ENCODE measurements at regions of chr14 and their contacts with region 1.

Region 1: DNA sequence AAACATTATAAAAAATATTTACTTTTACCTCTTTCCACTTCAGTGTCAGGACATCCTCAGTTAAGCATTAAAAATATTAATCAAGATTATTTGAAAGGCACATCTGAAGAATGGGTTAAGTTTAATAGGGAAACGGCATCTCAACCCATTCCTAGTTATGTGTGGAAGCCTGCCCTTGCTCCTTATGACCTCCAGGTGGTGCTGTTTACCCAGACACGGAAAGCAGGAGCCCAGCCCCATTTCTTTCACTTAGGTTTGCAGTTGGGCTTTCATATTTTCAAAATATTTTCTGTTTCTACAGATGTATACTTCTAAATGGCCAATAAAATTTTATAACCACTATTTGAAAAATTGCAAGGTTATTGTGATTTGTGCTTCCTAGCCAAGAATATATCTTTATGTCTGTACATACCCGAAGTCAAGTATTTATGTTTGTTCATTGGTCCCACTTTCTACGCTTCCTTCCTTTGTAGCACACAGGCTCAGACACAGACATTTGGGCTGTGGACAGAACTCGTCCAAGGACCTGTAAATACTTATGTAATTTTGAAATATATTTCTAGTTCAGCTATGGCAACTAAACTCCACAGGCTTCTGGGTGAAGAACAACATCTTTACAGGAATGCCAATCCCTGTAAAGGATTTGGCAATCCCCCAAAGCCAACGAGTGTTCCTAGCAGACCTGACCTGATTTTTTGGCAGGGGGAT is 247.1 kb downstream of the AKAP6 start:
- DNase-seq: no peak
- ATAC-seq: peak; percentile 66
- H3K4me3 Mint-ChIP-seq: no peak overlapping the region
- H3K27ac Mint-ChIP-seq: no peak overlapping the region
- H3K4me1 Mint-ChIP-seq: peaks cover 10% of the 10 kb centered on the region
- H3K27me3 Mint-ChIP-seq: peaks cover 1% of the 10 kb centered on the region
- CTCF ChIP-seq: peak; percentile 38

Region 2: GRCh38 chr14:32469388-32470160 is 106.7 kb before region 1 on chr14:
- CTCF ChIA-PET with region 1: no interaction called
- POLR2A ChIA-PET with region 1: no interaction called
- intact Hi-C with region 1: no loop called
- DNase-seq: no peak
- ATAC-seq: no peak
- H3K4me3 Mint-ChIP-seq: no peak overlapping the region
- H3K27ac Mint-ChIP-seq: no peak overlapping the region
- H3K4me1 Mint-ChIP-seq: no peaks in the 10 kb centered on the region
- H3K27me3 Mint-ChIP-seq: no peaks in the 10 kb centered on the region
- CTCF ChIP-seq: no peak

Region 3: GRCh38 chr14:33792720-33793368 is 1216.6 kb after region 1 on chr14:
- CTCF ChIA-PET with region 1: interaction called, 20 read pairs
- POLR2A ChIA-PET with region 1: no interaction called
- intact Hi-C with region 1: loop called (anchors 1 kb)
- DNase-seq: peak; percentile 30
- ATAC-seq: no peak
- H3K4me3 Mint-ChIP-seq: no peak overlapping the region
- H3K27ac Mint-ChIP-seq: no peak overlapping the region
- H3K4me1 Mint-ChIP-seq: peaks cover 6% of the 10 kb centered on the region
- H3K27me3 Mint-ChIP-seq: peaks cover 27% of the 10 kb centered on the region
- CTCF ChIP-seq: peak; percentile 49

Region 4: DNA sequence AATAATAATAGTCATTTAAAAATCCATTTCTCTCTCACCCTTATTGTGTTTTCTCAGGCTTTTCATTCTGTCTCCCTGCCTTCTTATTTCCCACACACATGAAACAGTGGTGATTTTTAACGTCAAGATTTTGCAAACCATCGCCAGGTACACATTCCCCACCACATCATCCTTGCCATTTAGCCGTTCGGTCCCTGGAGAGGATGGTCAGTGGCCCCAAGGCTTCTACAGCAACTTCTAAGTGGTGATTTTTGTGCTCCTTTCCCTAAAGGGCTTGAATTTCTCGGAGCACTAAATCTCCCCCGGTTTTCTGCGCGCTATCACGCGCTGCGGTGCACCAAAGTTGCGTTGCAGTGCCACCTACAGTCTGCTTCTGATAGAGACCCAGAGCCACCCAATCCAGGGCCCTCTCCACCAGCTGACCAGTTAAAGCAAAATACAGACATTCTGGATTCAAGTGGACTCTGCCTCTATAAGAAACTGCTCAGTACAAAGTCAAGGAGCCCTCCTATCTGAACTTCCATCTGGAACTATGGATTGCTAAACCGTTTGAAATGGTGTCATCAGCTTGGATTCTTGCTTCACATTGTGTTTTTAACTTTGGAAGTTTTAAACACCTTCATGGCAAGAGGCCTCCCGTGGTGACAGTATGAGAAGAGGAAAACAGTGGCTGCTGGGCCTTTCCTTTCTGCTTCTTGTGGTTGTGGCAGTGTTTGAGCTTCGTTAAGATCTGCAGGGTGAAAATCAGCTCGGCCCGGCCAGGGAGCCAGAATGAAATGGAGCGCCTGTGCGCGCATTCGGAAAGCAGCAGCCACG is 1651.8 kb after region 1 on chr14:
- CTCF ChIA-PET with region 1: no interaction called
- POLR2A ChIA-PET with region 1: no interaction called
- intact Hi-C with region 1: loop called (anchors 1 kb)
- DNase-seq: no peak
- ATAC-seq: no peak
- H3K4me3 Mint-ChIP-seq: no peak overlapping the region
- H3K27ac Mint-ChIP-seq: no peak overlapping the region
- H3K4me1 Mint-ChIP-seq: no peaks in the 10 kb centered on the region
- H3K27me3 Mint-ChIP-seq: peaks cover 3% of the 10 kb centered on the region
- CTCF ChIP-seq: no peak

Region 5: DNA sequence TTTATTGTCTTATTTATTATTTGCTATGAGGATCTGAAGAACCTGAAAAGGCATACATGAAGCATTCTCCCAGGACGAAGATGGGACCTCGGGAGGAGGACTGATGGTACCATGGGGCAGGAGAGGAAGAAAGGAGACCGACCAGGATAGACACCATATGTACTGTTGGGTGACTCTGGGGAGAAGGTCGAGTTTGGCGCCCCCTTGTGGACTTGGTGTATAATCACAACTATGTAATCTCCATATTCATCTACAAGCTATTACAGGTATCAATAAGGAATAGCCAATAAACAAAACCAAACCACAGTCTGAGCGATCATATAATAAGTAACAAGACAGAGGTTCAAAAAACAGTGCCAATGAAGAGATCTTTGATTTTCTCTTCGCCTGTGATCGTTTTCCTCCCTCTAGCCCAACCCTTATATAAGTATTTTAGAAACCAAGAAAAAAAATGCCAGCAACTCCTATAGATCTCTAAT is 1746.7 kb after region 1 on chr14:
- CTCF ChIA-PET with region 1: interaction called, 6 read pairs
- POLR2A ChIA-PET with region 1: no interaction called
- intact Hi-C with region 1: loop called (anchors 1 kb)
- DNase-seq: peak; percentile 37
- ATAC-seq: peak; percentile 60
- H3K4me3 Mint-ChIP-seq: no peak overlapping the region
- H3K27ac Mint-ChIP-seq: no peak overlapping the region
- H3K4me1 Mint-ChIP-seq: no peaks in the 10 kb centered on the region
- H3K27me3 Mint-ChIP-seq: peaks cover 6% of the 10 kb centered on the region
- CTCF ChIP-seq: no peak

Measured in activated B cell treated with CpG ODN at 0.5 μM for 24 hours (primary cell).